ENCODE measurements at regions of chr11 and their contacts with region 1.

Region 1: GRCh38 chr11:117969160-117969991 is 16.8 kb upstream of the IL10RA start:
- DNase-seq: peak in 1 of 2 donors; percentile 51
- ATAC-seq: peak; percentile 73 to 84 (median 81)
- H3K4me3 ChIP-seq: no peak overlapping the region
- H3K4me3 Mint-ChIP-seq: peak overlapping the region; percentile 70
- H3K27ac ChIP-seq: peak overlapping the region; percentile 38
- H3K27ac Mint-ChIP-seq: peak overlapping the region; percentile 85
- H3K4me1 ChIP-seq: peaks cover 57% of the 10 kb centered on the region
- H3K4me1 Mint-ChIP-seq: peaks cover 51 to 57% of the 10 kb centered on the region in 2 donors
- H3K27me3 ChIP-seq: no peaks in the 10 kb centered on the region
- H3K27me3 Mint-ChIP-seq: no peaks in the 10 kb centered on the region
- CTCF ChIP-seq: no peak

Region 2: DNA sequence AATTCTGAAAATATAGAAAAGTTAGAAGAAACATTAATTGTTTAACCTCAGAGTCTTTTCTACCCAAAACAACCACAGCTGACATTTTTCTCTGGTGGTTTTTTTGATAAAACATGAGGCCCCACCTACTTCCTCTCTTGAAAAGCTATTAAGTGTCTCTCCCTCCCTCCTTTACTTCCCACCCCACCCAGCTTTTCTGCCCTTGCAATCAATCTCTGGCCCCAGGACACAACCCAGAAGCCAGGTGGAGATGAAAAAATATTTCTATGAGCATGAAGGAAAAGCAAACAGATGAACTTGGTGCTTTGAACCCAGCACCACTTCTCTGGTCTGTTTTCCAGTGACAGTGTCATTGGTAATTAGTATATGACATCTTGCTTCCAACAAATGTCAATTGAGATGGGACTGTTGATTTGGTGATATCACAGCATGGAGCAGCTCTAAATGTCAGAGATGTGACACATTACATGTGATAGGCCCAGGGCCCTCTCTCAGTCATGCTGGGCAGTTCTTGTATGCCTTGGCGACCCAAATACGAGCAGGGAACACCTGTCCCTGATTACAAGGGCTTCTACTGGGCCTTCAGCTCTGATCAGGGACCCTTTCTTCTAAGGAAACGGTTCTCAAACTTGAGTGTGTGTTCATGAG is 16.2 kb before region 1 on chr11:
- intact Hi-C with region 1: loop called (anchors 1 kb)
- DNase-seq: peak in 1 of 2 donors; percentile 76
- ATAC-seq: peak; percentile 38 to 46 (median 41)
- H3K4me3 ChIP-seq: peak overlapping the region; percentile 11
- H3K4me3 Mint-ChIP-seq: peak overlapping the region; percentile 68
- H3K27ac ChIP-seq: peak overlapping the region; percentile 66
- H3K27ac Mint-ChIP-seq: peak overlapping the region; percentile 89 to 96
- H3K4me1 ChIP-seq: peaks cover 66% of the 10 kb centered on the region
- H3K4me1 Mint-ChIP-seq: peaks cover 68 to 72% of the 10 kb centered on the region in 2 donors
- H3K27me3 ChIP-seq: no peaks in the 10 kb centered on the region
- H3K27me3 Mint-ChIP-seq: no peaks in the 10 kb centered on the region
- CTCF ChIP-seq: no peak

Region 3: DNA sequence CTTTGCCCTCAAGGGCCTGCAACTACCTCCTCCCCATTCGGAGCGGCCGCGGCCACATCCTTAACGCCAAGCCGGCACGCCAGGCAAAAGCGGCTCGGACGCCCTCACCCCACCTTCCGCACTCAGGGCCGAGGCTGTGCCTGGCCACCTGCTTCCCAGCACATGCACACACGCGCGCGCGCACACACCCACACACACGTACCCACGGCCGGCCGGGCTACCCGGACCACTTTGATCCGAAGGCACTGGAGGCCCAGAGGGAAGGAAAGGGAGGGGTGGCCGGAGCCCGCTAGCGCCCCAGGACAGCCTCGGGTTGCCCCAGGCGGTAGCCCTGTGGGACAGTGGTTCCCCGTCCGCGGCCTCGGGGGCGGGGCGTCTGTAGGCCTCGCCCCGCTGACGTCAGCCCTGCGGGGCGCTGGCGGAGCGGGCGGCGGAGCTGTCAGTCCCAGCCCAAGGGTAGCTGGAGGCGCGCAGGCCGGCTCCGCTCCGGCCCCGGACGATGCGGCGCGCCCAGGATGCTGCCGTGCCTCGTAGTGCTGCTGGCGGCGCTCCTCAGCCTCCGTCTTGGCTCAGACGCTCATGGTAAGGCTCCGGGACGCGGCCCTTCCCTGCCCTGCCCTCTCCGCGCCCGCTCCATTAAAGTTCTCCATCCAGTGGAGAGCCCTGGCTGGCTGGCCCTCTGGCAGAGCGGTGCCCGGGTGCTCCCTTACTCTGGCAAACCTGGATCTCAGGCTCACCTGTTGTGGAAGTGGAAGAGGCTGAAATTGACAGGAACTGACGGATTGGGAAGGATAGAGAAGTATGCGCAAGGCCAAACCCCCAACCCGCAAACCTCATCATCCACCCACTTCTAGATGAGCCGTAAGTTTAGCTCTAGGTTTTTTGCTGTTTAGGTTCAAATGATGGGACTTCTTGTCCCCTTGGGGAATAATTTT is 16.8 kb after region 1 on chr11 and contains the start of gene IL10RA:
- intact Hi-C with region 1: loop called (anchors 2 kb)
- DNase-seq: peak; percentile 92
- ATAC-seq: peak; percentile 86 to 93 (median 89)
- H3K4me3 ChIP-seq: peak within 1 kb of the TSS; percentile 99
- H3K4me3 Mint-ChIP-seq: peak within 1 kb of the TSS; percentile 99
- H3K27ac ChIP-seq: peak within 1 kb of the TSS; percentile 96
- H3K27ac Mint-ChIP-seq: peak within 1 kb of the TSS; percentile 94 to 98
- H3K4me1 ChIP-seq: peaks cover 65% of the 10 kb centered on the region
- H3K4me1 Mint-ChIP-seq: peaks cover 78 to 80% of the 10 kb centered on the region in 2 donors
- H3K27me3 ChIP-seq: no peaks in the 10 kb centered on the region
- H3K27me3 Mint-ChIP-seq: no peaks in the 10 kb centered on the region
- CTCF ChIP-seq: no peak
- total RNA-seq, gene IL10RA: 263 to 286 (median 268) TPM

Region 4: GRCh38 chr11:118251858-118252652 is 282.7 kb after region 1 on chr11 and contains the start of gene MPZL3:
- intact Hi-C with region 1: no loop called
- DNase-seq: peak; percentile 76 to 97
- ATAC-seq: peak; percentile 75 to 83 (median 82)
- H3K4me3 ChIP-seq: peak within 1 kb of the TSS; percentile 82
- H3K4me3 Mint-ChIP-seq: peak within 1 kb of the TSS; percentile 98
- H3K27ac ChIP-seq: peak within 1 kb of the TSS; percentile 95
- H3K27ac Mint-ChIP-seq: peak within 1 kb of the TSS; percentile 98
- H3K4me1 ChIP-seq: peaks cover 8% of the 10 kb centered on the region
- H3K4me1 Mint-ChIP-seq: peaks cover 17 to 22% of the 10 kb centered on the region in 2 donors
- H3K27me3 ChIP-seq: no peaks in the 10 kb centered on the region
- H3K27me3 Mint-ChIP-seq: no peaks in the 10 kb centered on the region
- CTCF ChIP-seq: no peak
- total RNA-seq, gene MPZL3: 6.3 to 7.5 (median 6.7) TPM